ENCODE measurements at regions of chr17 and their contacts with region 1.

Region 1: GRCh38 chr17:44331249-44331760 is 6.7 kb upstream of the SLC25A39 start:
- DNase-seq: peak; percentile 79
- H3K4me3 ChIP-seq: peak overlapping the region in 1 of 2 experiments; percentile 14; a peak in 1 of 4 replicates
- H3K27ac ChIP-seq: no peak overlapping the region; a peak in 1 of 4 replicates
- H3K4me1 ChIP-seq: peaks cover 0 to 5% of the 10 kb centered on the region in 2 experiments; a peak in 1 of 4 replicates
- H3K27me3 ChIP-seq: no peaks in the 10 kb centered on the region
- CTCF ChIP-seq: peak; percentile 85
- EP300 ChIP-seq: no peak
- RAD21 ChIP-seq: peak; percentile 81

Region 2: GRCh38 chr17:44137891-44138709 is 193.2 kb before region 1 on chr17:
- CTCF ChIA-PET with region 1: no interaction called
- POLR2A ChIA-PET with region 1: no interaction called
- DNase-seq: peak; percentile 43
- H3K4me3 ChIP-seq: peak overlapping the region; percentile 22 to 48; a peak in 2 of 4 replicates
- H3K27ac ChIP-seq: peak overlapping the region in 1 of 2 experiments; percentile 91; a peak in 2 of 4 replicates
- H3K4me1 ChIP-seq: peaks cover 2 to 13% of the 10 kb centered on the region in 2 experiments; a peak in 3 of 4 replicates
- H3K27me3 ChIP-seq: no peaks in the 10 kb centered on the region
- CTCF ChIP-seq: no peak
- EP300 ChIP-seq: peak in 1 of 2 experiments; percentile 44; a peak in 1 of 4 replicates
- RAD21 ChIP-seq: no peak

Region 3: DNA sequence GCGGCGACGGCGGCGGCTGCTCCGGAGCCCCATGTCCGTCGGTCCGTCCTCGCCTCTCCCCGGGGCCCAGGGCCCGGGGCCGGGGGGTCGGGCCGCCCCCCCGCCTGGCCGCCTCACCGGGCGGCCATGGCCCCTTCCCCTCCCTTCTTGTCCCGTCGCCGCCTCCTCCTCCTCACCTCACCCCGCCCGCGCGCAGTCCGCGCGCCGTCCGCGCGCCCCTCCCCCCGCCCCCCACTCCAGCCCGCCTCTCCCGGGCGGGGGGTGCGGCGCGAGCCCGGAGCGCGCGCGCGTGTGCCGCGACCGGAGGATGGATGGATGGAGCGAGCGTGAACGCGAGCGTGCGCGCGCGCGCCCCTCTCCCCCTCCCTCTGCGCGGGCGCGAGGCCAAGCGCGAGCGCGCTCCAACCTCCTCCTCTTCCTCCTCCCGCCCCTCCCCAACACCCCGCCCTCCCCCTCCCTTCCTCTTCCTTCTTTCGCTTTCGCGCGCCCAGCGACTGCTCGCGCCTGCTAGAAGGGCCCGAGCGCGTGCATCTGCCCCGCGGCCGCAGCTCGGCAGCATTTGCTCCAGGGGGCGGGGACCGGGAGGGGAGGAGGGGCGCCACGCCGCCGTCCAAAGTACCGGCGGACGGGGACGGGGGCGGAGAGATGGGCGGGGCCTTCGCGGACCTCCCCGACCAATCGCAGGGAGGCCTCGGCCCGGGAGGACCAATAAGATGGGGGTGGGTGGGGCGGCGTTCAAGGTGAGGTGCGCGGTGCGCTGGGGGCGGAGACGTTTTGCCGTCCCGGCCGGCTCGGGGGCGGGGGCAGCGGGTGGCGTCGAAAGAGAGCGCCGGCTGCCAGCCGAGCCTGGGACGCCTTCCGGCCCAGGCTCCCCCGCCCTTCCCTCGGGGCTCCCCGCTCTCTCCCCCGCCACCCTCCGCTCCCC is 131.5 kb before region 1 on chr17 and contains the start of gene ATXN7L3:
- CTCF ChIA-PET with region 1: interaction called, 35 read pairs
- POLR2A ChIA-PET with region 1: no interaction called
- DNase-seq: peak; percentile 99
- H3K4me3 ChIP-seq: peak within 1 kb of the TSS; percentile 79 to 83
- H3K27ac ChIP-seq: peak within 1 kb of the TSS; percentile 85 to 96
- H3K4me1 ChIP-seq: peaks cover 16 to 30% of the 10 kb centered on the region in 2 experiments
- H3K27me3 ChIP-seq: no peaks in the 10 kb centered on the region
- CTCF ChIP-seq: no peak
- EP300 ChIP-seq: no peak
- RAD21 ChIP-seq: no peak
- polyA plus RNA-seq, gene ATXN7L3: 47.7 and 57.9 TPM in 2 replicates

Region 4: GRCh38 chr17:44218344-44219107 is 112.8 kb before region 1 on chr17:
- CTCF ChIA-PET with region 1: interaction called, 57 read pairs
- POLR2A ChIA-PET with region 1: interaction called, 6 read pairs
- DNase-seq: peak; percentile 95
- H3K4me3 ChIP-seq: peak overlapping the region; percentile 70 to 91
- H3K27ac ChIP-seq: peak overlapping the region; percentile 84 to 97
- H3K4me1 ChIP-seq: peaks cover 20 to 25% of the 10 kb centered on the region in 2 experiments
- H3K27me3 ChIP-seq: no peaks in the 10 kb centered on the region
- CTCF ChIP-seq: peak; percentile 75
- EP300 ChIP-seq: no peak; a peak in 1 of 4 replicates
- RAD21 ChIP-seq: peak; percentile 44

Region 5: GRCh38 chr17:44344939-44345453 is 13.7 kb after region 1 on chr17 and contains the start of gene GRN:
- CTCF ChIA-PET with region 1: interaction called, 53 read pairs
- POLR2A ChIA-PET with region 1: interaction called, 3 read pairs
- DNase-seq: peak; percentile 97
- H3K4me3 ChIP-seq: peak within 1 kb of the TSS; percentile 83 to 98
- H3K27ac ChIP-seq: peak within 1 kb of the TSS; percentile 40 to 66; a peak in 3 of 4 replicates
- H3K4me1 ChIP-seq: peaks cover 0 to 13% of the 10 kb centered on the region in 2 experiments; a peak in 1 of 4 replicates
- H3K27me3 ChIP-seq: no peaks in the 10 kb centered on the region
- CTCF ChIP-seq: no peak
- EP300 ChIP-seq: peak; percentile 53 to 60; a peak in 2 of 4 replicates
- RAD21 ChIP-seq: no peak
- polyA plus RNA-seq, gene GRN: 360 and 442 TPM in 2 replicates

Region 6: DNA sequence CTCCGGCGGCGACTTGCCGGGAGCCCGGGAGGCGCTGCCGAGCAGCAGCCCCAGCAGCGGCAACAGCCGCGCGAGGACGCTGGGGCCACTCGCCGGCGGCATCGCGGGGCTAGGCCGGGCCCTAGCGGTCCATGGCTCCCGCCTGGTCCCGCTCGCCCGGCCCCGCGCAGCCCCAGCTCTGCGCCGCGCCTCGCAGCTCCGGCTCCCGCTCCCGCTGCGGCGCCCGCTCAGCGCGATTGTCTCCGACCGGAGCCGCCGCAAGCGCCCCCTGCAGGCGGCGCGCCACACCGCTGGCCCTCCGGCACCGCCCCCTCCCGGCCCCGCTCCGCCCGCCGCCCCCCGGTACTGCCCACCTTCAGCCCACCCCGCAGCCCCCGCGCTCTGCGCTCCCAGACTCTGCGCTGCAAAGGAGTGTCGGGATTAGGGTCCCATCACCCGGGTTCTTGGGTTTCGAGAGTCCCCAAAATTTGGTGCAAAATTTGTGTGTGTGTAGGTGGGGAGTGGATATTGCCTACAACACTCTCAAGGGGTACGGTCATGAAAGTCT is 32.4 kb after region 1 on chr17 and contains the start of gene FAM171A2:
- CTCF ChIA-PET with region 1: interaction called, 13 read pairs
- POLR2A ChIA-PET with region 1: no interaction called
- DNase-seq: peak; percentile 97
- H3K4me3 ChIP-seq: peak within 1 kb of the TSS; percentile 80 to 89
- H3K27ac ChIP-seq: peak within 1 kb of the TSS in 1 of 2 experiments; percentile 76; a peak in 2 of 4 replicates
- H3K4me1 ChIP-seq: peaks cover 3 to 22% of the 10 kb centered on the region in 2 experiments; a peak in 1 of 4 replicates
- H3K27me3 ChIP-seq: no peaks in the 10 kb centered on the region; the same call in 1 of the 2 replicates
- CTCF ChIP-seq: peak; percentile 59
- EP300 ChIP-seq: no peak
- RAD21 ChIP-seq: peak; percentile 14; the same call in 1 of the 2 replicates
- polyA plus RNA-seq, gene FAM171A2: 4.8 and 4.9 TPM in 2 replicates

Region 7: GRCh38 chr17:44424828-44425461 is 93.6 kb after region 1 on chr17:
- CTCF ChIA-PET with region 1: no interaction called
- POLR2A ChIA-PET with region 1: no interaction called
- DNase-seq: no peak
- H3K4me3 ChIP-seq: no peak overlapping the region
- H3K27ac ChIP-seq: no peak overlapping the region
- H3K4me1 ChIP-seq: no peaks in the 10 kb centered on the region
- H3K27me3 ChIP-seq: no peaks in the 10 kb centered on the region
- CTCF ChIP-seq: no peak
- EP300 ChIP-seq: no peak
- RAD21 ChIP-seq: no peak

Region 8: GRCh38 chr17:44451832-44452231 is 120.5 kb after region 1 on chr17:
- CTCF ChIA-PET with region 1: no interaction called
- POLR2A ChIA-PET with region 1: no interaction called
- DNase-seq: no peak
- H3K4me3 ChIP-seq: no peak overlapping the region
- H3K27ac ChIP-seq: no peak overlapping the region
- H3K4me1 ChIP-seq: no peaks in the 10 kb centered on the region
- H3K27me3 ChIP-seq: no peaks in the 10 kb centered on the region
- CTCF ChIP-seq: no peak
- EP300 ChIP-seq: no peak
- RAD21 ChIP-seq: no peak

Measured in SK-N-SH (cell line).